OCI-LY7 (cell line): ENCODE measurements at regions of chr2 and their contacts with region 1.

Region 1: GRCh38 chr2:219648963-219649362 is 21.5 kb downstream of the SLC4A3 start:
- DNase-seq: no peak
- H3K4me3 ChIP-seq: no peak overlapping the region
- H3K27ac ChIP-seq: no peak overlapping the region
- H3K4me1 ChIP-seq: no peaks in the 10 kb centered on the region
- CTCF ChIP-seq: no peak

Region 2: GRCh38 chr2:217916504-217917254 is 1732.3 kb before region 1 on chr2:
- CTCF ChIA-PET with region 1: no interaction called
- POLR2A ChIA-PET with region 1: interaction called, 10 read pairs
- intact Hi-C with region 1: no loop called
- DNase-seq: no peak
- H3K4me3 ChIP-seq: no peak overlapping the region
- H3K27ac ChIP-seq: no peak overlapping the region
- H3K4me1 ChIP-seq: no peaks in the 10 kb centered on the region
- CTCF ChIP-seq: no peak